T-cell (primary cell): ENCODE measurements at regions of chr4 and their contacts with region 1.

Region 1: GRCh38 chr4:123083646-123084045 is 161.2 kb upstream of the NUDT6 start:
- DNase-seq: no peak
- ATAC-seq: no peak
- H3K4me3 ChIP-seq: no peak overlapping the region
- H3K4me3 Mint-ChIP-seq: no peak overlapping the region
- H3K27ac ChIP-seq: no peak overlapping the region
- H3K27ac Mint-ChIP-seq: no peak overlapping the region
- H3K4me1 ChIP-seq: no peaks in the 10 kb centered on the region
- H3K4me1 Mint-ChIP-seq: peaks cover 0 to 2% (median 1%) of the 10 kb centered on the region in 3 donors
- H3K27me3 ChIP-seq: no peaks in the 10 kb centered on the region
- H3K27me3 Mint-ChIP-seq: no peaks in the 10 kb centered on the region

Region 2: DNA sequence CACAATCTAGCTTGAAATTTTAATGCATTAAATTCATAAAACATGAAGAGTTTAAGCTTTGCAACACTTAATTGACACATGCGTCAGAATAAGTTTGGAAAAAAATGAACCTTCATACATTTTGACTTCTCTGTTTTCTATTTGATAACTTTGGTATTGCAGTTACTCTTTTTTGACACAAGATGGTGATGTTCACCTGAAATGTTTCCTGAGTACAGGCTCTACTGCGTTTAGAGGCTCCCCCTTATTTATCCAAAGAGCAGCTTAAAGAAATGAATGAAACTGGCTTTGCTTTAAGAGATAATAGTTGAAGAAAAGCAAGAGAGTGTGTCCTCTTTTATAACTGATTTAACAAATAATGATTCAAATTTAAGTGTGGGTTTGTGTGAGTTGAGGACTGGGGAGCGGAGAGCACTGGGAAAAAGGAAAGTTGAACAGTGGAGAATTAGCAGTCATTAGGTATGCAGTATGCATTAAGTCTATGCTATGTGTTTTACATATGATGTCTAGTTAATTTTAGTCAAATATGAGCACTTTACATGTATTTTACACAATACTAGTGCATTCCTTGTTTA is 19.3 kb after region 1 on chr4:
- CTCF ChIA-PET with region 1: interaction called in 1 of 2 experiments, 12 read pairs
- POLR2A ChIA-PET with region 1: interaction called in 1 of 2 experiments, 3 read pairs
- DNase-seq: peak in 1 of 35 experiments; percentile 33
- ATAC-seq: no peak
- H3K4me3 ChIP-seq: no peak overlapping the region
- H3K4me3 Mint-ChIP-seq: no peak overlapping the region
- H3K27ac ChIP-seq: no peak overlapping the region
- H3K27ac Mint-ChIP-seq: no peak overlapping the region
- H3K4me1 ChIP-seq: no peaks in the 10 kb centered on the region
- H3K4me1 Mint-ChIP-seq: no peaks in the 10 kb centered on the region
- H3K27me3 ChIP-seq: no peaks in the 10 kb centered on the region
- H3K27me3 Mint-ChIP-seq: no peaks in the 10 kb centered on the region